ENCODE measurements at regions of chr1 and their contacts with region 1.

Region 1: GRCh38 chr1:28172713-28173150 is 3.8 kb downstream of the PTAFR start:
- DNase-seq: peak; percentile 61
- ATAC-seq: peak; percentile 25
- H3K4me3 Mint-ChIP-seq: no peak overlapping the region
- H3K27ac Mint-ChIP-seq: no peak overlapping the region
- H3K4me1 Mint-ChIP-seq: peaks cover 46% of the 10 kb centered on the region
- H3K27me3 Mint-ChIP-seq: peaks cover 45% of the 10 kb centered on the region
- CTCF ChIP-seq: no peak

Region 2: GRCh38 chr1:28199328-28200233 is 26.8 kb after region 1 on chr1:
- CTCF ChIA-PET with region 1: interaction called, 5 read pairs
- POLR2A ChIA-PET with region 1: interaction called, 6 read pairs
- intact Hi-C with region 1: loop called (anchors 1 kb)
- DNase-seq: peak; percentile 92
- ATAC-seq: peak; percentile 88
- H3K4me3 Mint-ChIP-seq: peak overlapping the region; percentile 38
- H3K27ac Mint-ChIP-seq: peak overlapping the region; percentile 97
- H3K4me1 Mint-ChIP-seq: peaks cover 43% of the 10 kb centered on the region
- H3K27me3 Mint-ChIP-seq: no peaks in the 10 kb centered on the region
- CTCF ChIP-seq: no peak

Region 3: GRCh38 chr1:28235755-28236655 is 63.3 kb after region 1 on chr1 and contains the start of gene ATP5IF1:
- CTCF ChIA-PET with region 1: no interaction called
- POLR2A ChIA-PET with region 1: no interaction called
- intact Hi-C with region 1: no loop called
- DNase-seq: peak; percentile 98
- ATAC-seq: peak; percentile 95
- H3K4me3 Mint-ChIP-seq: no peak within 1 kb of the TSS
- H3K27ac Mint-ChIP-seq: no peak within 1 kb of the TSS
- H3K4me1 Mint-ChIP-seq: peaks cover 14% of the 10 kb centered on the region
- H3K27me3 Mint-ChIP-seq: no peaks in the 10 kb centered on the region
- CTCF ChIP-seq: no peak
- total RNA-seq, gene ATP5IF1: 169 to 170 TPM

Region 4: GRCh38 chr1:28282426-28283407 is 110.0 kb after region 1 on chr1:
- CTCF ChIA-PET with region 1: no interaction called
- POLR2A ChIA-PET with region 1: no interaction called
- intact Hi-C with region 1: no loop called
- DNase-seq: no peak
- ATAC-seq: no peak
- H3K4me3 Mint-ChIP-seq: no peak overlapping the region
- H3K27ac Mint-ChIP-seq: peak overlapping the region; percentile 16
- H3K4me1 Mint-ChIP-seq: no peaks in the 10 kb centered on the region
- H3K27me3 Mint-ChIP-seq: no peaks in the 10 kb centered on the region
- CTCF ChIP-seq: no peak